HEK293 (cell line): ENCODE measurements at regions of chr10 and their contacts with region 1.

Region 1: GRCh38 chr10:84429926-84430520 is 101.6 kb downstream of the CCSER2 start:
- H3K4me3 ChIP-seq: no peak overlapping the region
- H3K27ac ChIP-seq: no peak overlapping the region
- H3K4me1 ChIP-seq: 0 out of 2 replicates have a peak, but pooled peaks cover 2% of the 10 kb centered on the region
- CTCF ChIP-seq: peak; percentile 53; the same call in 1 of the 2 replicates

Region 2: DNA sequence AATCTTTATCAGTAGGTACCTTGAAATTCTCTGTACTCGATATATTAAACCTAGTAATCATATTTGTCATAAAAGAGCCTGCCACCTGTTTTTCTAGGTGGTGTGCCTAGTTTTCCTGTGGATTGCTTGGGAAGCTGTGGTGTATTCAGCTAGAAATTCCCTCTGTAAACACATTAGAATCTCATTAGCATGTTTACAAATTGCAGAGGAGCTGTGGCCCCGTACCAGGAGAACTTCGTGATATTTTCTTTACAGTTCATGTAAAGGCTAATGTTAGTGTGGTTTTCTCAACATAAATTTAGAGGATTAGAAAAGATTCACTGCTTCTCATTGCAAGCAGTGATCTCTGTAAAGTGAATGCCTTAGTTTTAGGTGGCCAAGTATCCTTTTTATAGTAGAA is 43.1 kb after region 1 on chr10:
- CTCF ChIA-PET with region 1: interaction called, 12 read pairs
- POLR2A ChIA-PET with region 1: no interaction called
- H3K4me3 ChIP-seq: no peak overlapping the region
- H3K27ac ChIP-seq: no peak overlapping the region
- H3K4me1 ChIP-seq: no peaks in the 10 kb centered on the region
- CTCF ChIP-seq: no peak